A673 (cell line): ENCODE measurements at regions of chr17 and their contacts with region 1.

Region 1: GRCh38 chr17:3647769-3648555 is 11.4 kb downstream of the CTNS start:
- DNase-seq: peak; percentile 55
- H3K4me3 ChIP-seq: no peak overlapping the region
- H3K27ac ChIP-seq: no peak overlapping the region
- H3K4me1 ChIP-seq: no peaks in the 10 kb centered on the region
- H3K27me3 ChIP-seq: no peaks in the 10 kb centered on the region
- CTCF ChIP-seq: peak; percentile 55

Region 2: GRCh38 chr17:3048767-3049471 is 599.0 kb before region 1 on chr17:
- CTCF ChIA-PET with region 1: no interaction called
- POLR2A ChIA-PET with region 1: no interaction called
- intact Hi-C with region 1: loop called (anchors 10 kb)
- DNase-seq: peak; percentile 99
- H3K4me3 ChIP-seq: peak overlapping the region; percentile 53
- H3K27ac ChIP-seq: peak overlapping the region; percentile 11
- H3K4me1 ChIP-seq: no peaks in the 10 kb centered on the region
- H3K27me3 ChIP-seq: no peaks in the 10 kb centered on the region
- CTCF ChIP-seq: peak; percentile 92

Region 3: DNA sequence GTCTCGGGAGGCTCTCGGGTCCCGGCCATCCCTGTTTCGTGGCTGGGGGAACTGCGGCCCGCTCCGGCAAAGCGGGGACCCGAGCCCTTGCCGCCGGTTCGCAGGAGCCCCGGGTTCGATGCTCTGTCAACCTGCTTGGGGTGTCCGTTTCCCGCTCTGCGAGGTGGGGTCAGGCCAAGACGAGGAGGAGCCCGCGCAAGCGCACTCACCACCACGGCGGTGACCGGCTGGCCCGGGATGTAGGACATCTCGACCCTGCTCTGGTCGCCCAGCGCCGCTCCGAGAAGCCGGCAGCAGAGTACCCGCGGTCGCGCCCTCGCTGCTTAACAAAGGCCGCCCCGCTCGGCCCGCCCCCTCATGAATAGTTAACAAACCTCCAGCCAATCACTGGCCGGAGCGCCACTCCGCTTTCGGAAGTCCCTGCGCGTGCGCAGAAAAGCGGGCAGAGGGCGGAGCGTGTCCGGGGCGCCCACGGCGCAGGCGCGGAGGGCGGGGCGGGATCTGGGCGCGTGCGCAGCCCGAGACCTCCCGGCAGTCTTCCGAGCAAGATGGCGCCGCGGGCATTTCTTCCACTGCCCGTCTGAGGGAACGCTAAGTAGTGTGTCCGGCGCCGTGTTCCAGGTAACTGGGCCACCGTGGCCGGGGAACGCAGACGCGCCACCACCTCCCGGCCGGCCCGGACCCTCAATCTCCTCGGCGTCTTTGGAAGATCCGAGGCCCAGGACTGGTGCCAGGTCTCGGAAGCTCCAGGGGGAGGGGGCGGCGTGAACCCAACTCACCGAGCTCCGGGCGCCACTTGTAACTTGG is 20.5 kb after region 1 on chr17 and contains the starts of genes EMC6 and TAX1BP3:
- CTCF ChIA-PET with region 1: no interaction called
- POLR2A ChIA-PET with region 1: no interaction called
- intact Hi-C with region 1: no loop called
- DNase-seq: peak; percentile 98
- H3K4me3 ChIP-seq: peak within 1 kb of the TSS; percentile 100
- H3K27ac ChIP-seq: peak within 1 kb of the TSS; percentile 92
- H3K4me1 ChIP-seq: peaks cover 7% of the 10 kb centered on the region
- H3K27me3 ChIP-seq: no peaks in the 10 kb centered on the region
- CTCF ChIP-seq: no peak
- total RNA-seq, gene EMC6: 68.7 and 70.9 TPM in 2 replicates
- total RNA-seq, gene TAX1BP3: 79.0 and 92.5 TPM in 2 replicates

Region 4: GRCh38 chr17:3723556-3724369 is 75.8 kb after region 1 on chr17 and contains the start of gene HASPIN:
- CTCF ChIA-PET with region 1: no interaction called
- POLR2A ChIA-PET with region 1: interaction called, 12 read pairs
- intact Hi-C with region 1: no loop called
- DNase-seq: peak; percentile 96
- H3K4me3 ChIP-seq: peak within 1 kb of the TSS; percentile 98
- H3K27ac ChIP-seq: peak within 1 kb of the TSS; percentile 90
- H3K4me1 ChIP-seq: no peaks in the 10 kb centered on the region
- H3K27me3 ChIP-seq: no peaks in the 10 kb centered on the region
- CTCF ChIP-seq: no peak
- total RNA-seq, gene HASPIN: 30.1 and 31.4 TPM in 2 replicates